Activated CD8-positive, alpha-beta T cell treated with anti-CD3 and anti-CD28 coated beads for 36 hours (primary cell): ENCODE measurements at regions of chr10 and their contacts with region 1.

Region 1: DNA sequence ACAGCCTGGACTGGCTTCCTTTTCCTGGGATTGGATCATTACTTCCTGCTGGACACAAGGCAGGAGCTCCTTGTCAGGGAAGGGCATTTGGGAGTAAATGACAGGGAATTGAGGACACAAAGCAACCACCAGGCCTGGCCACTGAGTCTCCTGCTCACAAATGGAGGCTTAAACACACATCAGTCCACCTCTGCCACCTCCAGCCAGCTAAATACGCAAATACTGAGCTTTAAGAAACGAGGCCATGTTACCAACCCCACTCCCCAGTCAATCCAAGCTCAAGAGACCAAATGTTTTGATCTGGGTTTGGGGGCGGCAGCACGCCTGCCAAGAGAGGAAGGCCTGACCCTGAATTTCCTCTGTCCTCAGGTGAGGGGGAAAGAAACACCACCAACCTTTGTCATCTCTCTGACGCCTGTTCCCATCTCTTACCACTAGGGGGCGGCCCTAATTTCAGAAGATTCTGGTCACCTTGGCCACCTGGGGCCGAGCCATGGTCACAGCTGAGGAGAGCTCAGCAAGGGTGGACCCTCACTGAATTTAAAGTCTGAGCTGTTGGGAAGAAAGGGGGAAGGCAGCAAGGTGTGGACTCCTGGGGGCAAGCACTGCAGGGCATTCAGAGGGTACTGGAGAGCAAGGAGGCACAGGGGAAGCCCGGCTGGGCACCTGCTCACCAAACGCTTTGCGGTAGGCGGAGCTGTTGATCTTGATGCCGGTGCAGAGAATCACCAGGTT is 16.5 kb downstream of the AIFM2 start:
- DNase-seq: peak; percentile 77
- ATAC-seq: peak; percentile 93
- H3K4me3 Mint-ChIP-seq: no peak overlapping the region
- H3K27ac Mint-ChIP-seq: no peak overlapping the region
- H3K4me1 Mint-ChIP-seq: peaks cover 11% of the 10 kb centered on the region
- H3K27me3 Mint-ChIP-seq: no peaks in the 10 kb centered on the region
- CTCF ChIP-seq: peak; percentile 90

Region 2: DNA sequence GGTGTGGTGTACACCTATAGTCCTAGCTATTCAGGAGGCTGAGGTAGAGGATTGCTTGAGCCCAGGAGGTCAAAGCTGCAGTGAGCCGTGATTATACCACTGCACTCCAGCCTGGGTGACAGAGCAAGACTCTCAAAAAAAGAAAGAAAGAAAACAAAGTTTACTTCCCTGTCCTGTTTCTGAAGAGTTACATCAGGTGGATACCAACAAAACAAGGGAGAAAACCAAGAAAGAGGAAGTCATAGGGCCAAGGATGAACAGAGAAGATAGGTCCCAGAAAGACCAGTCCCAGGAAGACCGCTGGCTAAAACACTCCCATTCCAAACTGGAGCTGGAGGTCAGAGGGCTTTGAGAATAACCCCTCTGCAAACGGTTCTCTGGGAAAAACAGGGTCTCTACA is 49.9 kb before region 1 on chr10:
- CTCF ChIA-PET with region 1: interaction called, 13 read pairs
- POLR2A ChIA-PET with region 1: no interaction called
- intact Hi-C with region 1: no loop called
- DNase-seq: no peak
- ATAC-seq: no peak
- H3K4me3 Mint-ChIP-seq: no peak overlapping the region
- H3K27ac Mint-ChIP-seq: no peak overlapping the region
- H3K4me1 Mint-ChIP-seq: no peaks in the 10 kb centered on the region
- H3K27me3 Mint-ChIP-seq: no peaks in the 10 kb centered on the region
- CTCF ChIP-seq: no peak

Region 3: DNA sequence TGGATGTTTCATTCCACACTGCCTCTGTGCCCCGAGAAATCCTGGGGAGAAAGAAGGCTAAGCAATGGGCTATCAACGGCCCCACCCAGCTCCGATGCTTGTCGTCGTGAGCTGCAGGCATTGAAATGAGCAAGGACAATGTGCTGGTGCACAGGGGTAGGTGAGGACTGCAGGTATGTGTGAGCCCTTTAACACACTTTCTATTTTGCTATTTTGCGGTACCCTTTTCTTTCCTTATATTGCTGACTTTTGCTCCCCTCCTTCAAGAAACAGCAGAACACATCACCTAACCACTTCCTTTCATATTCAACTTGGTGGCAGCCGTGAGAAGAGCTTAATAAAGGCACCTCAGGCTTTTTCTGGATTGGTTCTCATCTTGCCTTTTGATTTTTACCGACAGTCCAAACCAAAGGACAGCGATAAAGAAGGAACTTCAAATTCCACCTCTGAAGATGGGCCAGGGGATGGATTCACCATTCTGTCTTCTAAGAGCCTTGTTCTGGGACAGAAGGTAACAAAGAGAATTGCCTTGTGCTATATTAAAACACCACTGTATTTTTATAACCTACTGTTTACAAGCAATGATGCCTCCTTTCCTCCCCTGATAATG is 22.7 kb before region 1 on chr10:
- CTCF ChIA-PET with region 1: interaction called, 99 read pairs
- POLR2A ChIA-PET with region 1: interaction called, 3 read pairs
- intact Hi-C with region 1: no loop called
- DNase-seq: peak; percentile 39
- ATAC-seq: peak; percentile 88
- H3K4me3 Mint-ChIP-seq: peak overlapping the region; percentile 85
- H3K27ac Mint-ChIP-seq: peak overlapping the region; percentile 94
- H3K4me1 Mint-ChIP-seq: peaks cover 44% of the 10 kb centered on the region
- H3K27me3 Mint-ChIP-seq: no peaks in the 10 kb centered on the region
- CTCF ChIP-seq: no peak

Region 4: GRCh38 chr10:70132098-70133029 is 16.2 kb after region 1 on chr10 and contains the start of gene AIFM2:
- CTCF ChIA-PET with region 1: interaction called, 43 read pairs
- POLR2A ChIA-PET with region 1: interaction called, 4 read pairs
- intact Hi-C with region 1: no loop called
- DNase-seq: peak; percentile 55
- ATAC-seq: peak; percentile 88
- H3K4me3 Mint-ChIP-seq: peak within 1 kb of the TSS; percentile 80
- H3K27ac Mint-ChIP-seq: peak within 1 kb of the TSS; percentile 93
- H3K4me1 Mint-ChIP-seq: peaks cover 22% of the 10 kb centered on the region
- H3K27me3 Mint-ChIP-seq: no peaks in the 10 kb centered on the region
- CTCF ChIP-seq: no peak
- total RNA-seq, gene AIFM2: 6.3 to 8.2 TPM

Region 5: GRCh38 chr10:70146489-70147258 is 30.6 kb after region 1 on chr10 and contains the start of gene TYSND1:
- CTCF ChIA-PET with region 1: interaction called, 62 read pairs
- POLR2A ChIA-PET with region 1: interaction called, 11 read pairs
- intact Hi-C with region 1: no loop called
- DNase-seq: peak; percentile 97
- ATAC-seq: peak; percentile 89
- H3K4me3 Mint-ChIP-seq: peak within 1 kb of the TSS; percentile 89
- H3K27ac Mint-ChIP-seq: peak within 1 kb of the TSS; percentile 95
- H3K4me1 Mint-ChIP-seq: peaks cover 35% of the 10 kb centered on the region
- H3K27me3 Mint-ChIP-seq: no peaks in the 10 kb centered on the region
- CTCF ChIP-seq: peak; percentile 41
- total RNA-seq, gene TYSND1: 20.0 to 20.3 TPM

Region 6: GRCh38 chr10:70198696-70199466 is 82.8 kb after region 1 on chr10:
- CTCF ChIA-PET with region 1: interaction called, 14 read pairs
- POLR2A ChIA-PET with region 1: no interaction called
- intact Hi-C with region 1: no loop called
- DNase-seq: peak; percentile 16
- ATAC-seq: no peak
- H3K4me3 Mint-ChIP-seq: no peak overlapping the region
- H3K27ac Mint-ChIP-seq: peak overlapping the region; percentile 20
- H3K4me1 Mint-ChIP-seq: peaks cover 31% of the 10 kb centered on the region
- H3K27me3 Mint-ChIP-seq: no peaks in the 10 kb centered on the region
- CTCF ChIP-seq: no peak

Region 7: DNA sequence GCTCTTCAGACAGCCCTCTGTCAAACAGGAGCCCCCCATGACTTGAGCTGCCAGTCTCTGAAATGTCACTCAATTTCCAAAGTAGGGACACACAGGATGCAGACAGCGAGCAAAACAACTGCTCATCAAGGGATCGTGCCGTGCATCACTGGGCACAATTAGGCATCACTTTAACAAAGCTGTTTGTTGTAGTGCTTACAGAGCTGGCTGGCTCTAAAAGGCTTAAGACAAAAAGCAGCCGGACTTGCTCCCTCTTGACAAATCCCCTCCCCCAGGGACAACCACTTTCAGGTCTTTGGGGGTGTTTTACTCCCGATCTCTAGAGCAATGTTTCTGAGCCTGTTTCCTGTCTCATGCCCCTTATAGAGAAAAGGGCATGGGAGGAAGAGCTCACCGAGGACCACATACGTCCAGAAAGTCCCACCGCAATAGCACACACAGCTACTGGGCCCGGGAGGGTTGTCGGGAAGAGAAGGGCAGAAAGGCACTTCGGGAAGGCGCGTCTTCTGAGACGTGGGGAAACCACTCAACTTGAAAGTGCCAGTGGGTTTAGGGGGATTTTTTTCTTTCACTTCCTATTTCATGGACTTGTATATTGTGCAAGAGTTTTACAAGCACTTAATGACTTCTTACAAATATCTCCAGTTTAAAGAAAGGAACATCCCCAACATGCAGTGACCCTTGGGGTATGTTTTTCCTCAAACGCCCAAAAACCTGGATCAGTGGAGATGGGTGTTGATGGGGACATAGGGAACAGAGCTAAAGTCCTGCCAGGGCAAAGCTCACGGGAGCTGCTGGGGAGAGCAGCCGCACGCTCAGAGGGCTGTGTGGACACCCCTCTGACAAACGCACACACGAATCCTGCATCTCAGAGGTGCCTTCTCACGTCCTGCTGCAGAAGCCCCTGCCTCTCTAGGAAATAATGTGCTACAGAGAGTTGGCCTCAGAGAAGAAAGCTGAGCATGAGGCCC is 239.2 kb after region 1 on chr10:
- CTCF ChIA-PET with region 1: interaction called, 13 read pairs
- POLR2A ChIA-PET with region 1: no interaction called
- intact Hi-C with region 1: no loop called
- DNase-seq: peak; percentile 40
- ATAC-seq: peak; percentile 77
- H3K4me3 Mint-ChIP-seq: peak overlapping the region; percentile 64
- H3K27ac Mint-ChIP-seq: peak overlapping the region; percentile 73
- H3K4me1 Mint-ChIP-seq: peaks cover 20% of the 10 kb centered on the region
- H3K27me3 Mint-ChIP-seq: no peaks in the 10 kb centered on the region
- CTCF ChIP-seq: no peak